ENCODE measurements at regions of chr14 and their contacts with region 1.

Region 1: DNA sequence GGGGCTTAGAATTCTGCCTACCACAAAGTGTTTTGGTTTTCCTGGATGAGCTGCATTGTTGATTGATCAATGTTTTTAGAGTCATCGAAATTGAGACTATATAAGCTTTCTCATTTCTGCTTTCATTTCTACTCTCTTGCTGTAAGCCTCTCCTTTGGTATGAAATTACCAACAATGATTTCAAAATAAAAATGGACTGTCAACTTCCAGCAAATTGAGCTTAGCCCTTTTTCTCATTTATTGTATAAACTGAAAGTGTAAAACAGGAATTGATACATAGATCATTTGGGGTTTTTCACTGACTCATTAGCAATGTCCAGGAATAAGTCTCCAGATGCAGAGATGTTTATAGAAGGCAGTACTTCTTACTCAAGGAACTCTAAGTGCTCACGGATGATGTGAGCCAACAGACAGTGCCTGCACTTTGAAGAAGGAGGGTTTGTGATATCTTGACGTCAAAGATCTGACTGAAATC is 20.0 kb upstream of the PCNX1 start:
- DNase-seq: peak; percentile 60
- H3K4me3 ChIP-seq: no peak overlapping the region
- CTCF ChIP-seq: no peak

Region 2: DNA sequence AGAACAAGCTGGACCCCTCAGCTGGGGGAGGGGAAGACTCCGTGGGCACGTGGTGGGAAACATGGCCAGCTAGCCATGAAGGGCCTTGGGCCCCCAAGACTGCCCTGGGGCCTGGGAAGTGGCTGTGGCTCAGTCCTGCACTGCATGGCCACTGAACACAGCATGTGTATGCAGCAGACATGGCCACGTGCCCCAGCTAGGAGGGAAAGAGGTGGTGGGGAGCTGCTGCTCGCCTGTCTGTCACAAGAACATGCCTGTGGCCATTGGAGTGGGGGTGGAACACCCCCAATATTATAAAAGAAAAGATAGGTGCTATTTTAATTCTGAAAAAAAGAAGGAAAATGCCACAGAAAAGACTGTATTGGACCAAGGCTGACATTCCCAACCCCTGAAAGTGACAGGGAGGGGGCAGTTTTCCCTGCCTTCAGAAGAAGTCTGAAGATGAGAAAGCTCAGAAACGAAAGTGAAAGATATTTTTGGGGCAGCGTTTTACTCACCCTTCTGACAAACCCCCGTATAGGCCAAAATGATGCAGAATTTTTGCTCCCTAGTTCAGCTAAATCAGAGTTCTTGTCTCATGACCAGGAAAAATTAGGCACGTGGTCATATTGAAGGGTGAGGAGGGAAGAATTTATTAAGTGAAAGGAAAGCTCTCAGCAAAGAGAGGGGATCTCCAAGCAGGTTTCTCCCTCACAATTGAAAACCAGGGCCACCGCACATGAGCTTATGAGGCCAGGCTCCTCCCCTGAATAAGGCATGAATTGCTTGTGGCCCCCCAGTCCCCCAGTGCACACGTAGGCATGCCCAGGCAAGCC is 15.2 kb before region 1 on chr14:
- CTCF ChIA-PET with region 1: interaction called, 13 read pairs
- POLR2A ChIA-PET with region 1: no interaction called
- DNase-seq: no peak
- H3K4me3 ChIP-seq: no peak overlapping the region
- CTCF ChIP-seq: no peak

Region 3: DNA sequence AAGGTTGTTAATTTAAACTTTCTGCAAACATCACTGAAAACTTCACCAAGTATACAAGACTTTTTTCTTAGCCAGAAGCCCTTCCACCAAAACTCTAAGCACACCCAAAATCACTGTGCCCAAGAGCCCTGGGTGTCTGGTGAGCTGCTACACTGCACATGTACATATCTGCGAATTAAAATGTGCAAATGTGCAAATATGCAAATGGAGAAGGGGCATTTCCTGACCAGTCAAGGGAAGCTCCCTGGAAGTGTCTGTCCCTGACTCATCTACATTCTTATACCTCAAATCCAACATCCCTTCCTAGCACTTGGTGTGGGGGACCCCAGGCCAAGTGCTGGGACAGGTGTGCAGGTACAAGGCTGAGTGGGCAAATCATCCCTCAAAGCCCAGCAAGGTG is 143.8 kb after region 1 on chr14:
- CTCF ChIA-PET with region 1: no interaction called
- POLR2A ChIA-PET with region 1: no interaction called
- DNase-seq: no peak
- H3K4me3 ChIP-seq: no peak overlapping the region
- CTCF ChIP-seq: no peak